ENCODE measurements at regions of chr15 and their contacts with region 1.

Region 1: DNA sequence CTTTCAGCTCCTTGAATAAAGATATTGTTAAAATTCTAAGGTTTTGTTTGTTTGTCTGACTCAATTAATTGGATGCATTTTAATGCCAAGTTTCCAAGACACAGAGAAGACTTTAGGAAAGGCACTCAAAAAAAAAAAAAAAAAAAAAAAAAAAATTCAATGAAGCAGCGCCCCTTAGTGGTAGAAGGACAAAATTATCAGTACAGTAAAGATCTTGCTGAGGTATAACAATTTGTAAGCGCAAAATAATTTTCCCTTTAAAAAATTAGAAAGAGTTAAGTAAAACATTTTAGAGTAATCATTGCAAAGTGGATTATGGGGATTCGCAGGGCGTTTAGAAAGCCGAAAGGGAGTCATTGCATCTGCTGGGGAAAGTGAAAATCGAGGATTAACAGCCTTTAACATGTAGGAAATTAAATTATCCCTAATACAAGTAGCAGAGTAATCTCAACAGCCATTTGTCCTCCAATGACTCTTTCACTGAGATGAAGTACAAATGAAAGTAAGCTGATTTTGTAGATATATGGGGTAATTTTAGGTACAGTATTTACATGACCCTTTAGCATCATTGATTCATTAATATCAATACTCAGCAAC is 5.8 kb upstream of the DIS3L start:
- DNase-seq: no peak
- H3K4me3 ChIP-seq: no peak overlapping the region
- H3K27ac ChIP-seq: no peak overlapping the region
- H3K4me1 ChIP-seq: peaks cover 4% of the 10 kb centered on the region
- H3K27me3 ChIP-seq: no peaks in the 10 kb centered on the region
- CTCF ChIP-seq: peak; percentile 60

Region 2: GRCh38 chr15:65980824-65981456 is 306.6 kb before region 1 on chr15:
- intact Hi-C with region 1: loop called (anchors 5 kb)
- DNase-seq: peak; percentile 72
- H3K4me3 ChIP-seq: no peak overlapping the region
- H3K27ac ChIP-seq: no peak overlapping the region
- H3K4me1 ChIP-seq: no peaks in the 10 kb centered on the region
- H3K27me3 ChIP-seq: no peaks in the 10 kb centered on the region
- CTCF ChIP-seq: peak; percentile 78

Region 3: GRCh38 chr15:66251790-66252684 is 35.5 kb before region 1 on chr15:
- intact Hi-C with region 1: loop called (anchors 5 kb)
- DNase-seq: peak; percentile 57
- H3K4me3 ChIP-seq: peak overlapping the region; percentile 47
- H3K27ac ChIP-seq: no peak overlapping the region
- H3K4me1 ChIP-seq: peaks cover 18% of the 10 kb centered on the region
- H3K27me3 ChIP-seq: peaks cover 56% of the 10 kb centered on the region
- CTCF ChIP-seq: peak; percentile 72

Region 4: DNA sequence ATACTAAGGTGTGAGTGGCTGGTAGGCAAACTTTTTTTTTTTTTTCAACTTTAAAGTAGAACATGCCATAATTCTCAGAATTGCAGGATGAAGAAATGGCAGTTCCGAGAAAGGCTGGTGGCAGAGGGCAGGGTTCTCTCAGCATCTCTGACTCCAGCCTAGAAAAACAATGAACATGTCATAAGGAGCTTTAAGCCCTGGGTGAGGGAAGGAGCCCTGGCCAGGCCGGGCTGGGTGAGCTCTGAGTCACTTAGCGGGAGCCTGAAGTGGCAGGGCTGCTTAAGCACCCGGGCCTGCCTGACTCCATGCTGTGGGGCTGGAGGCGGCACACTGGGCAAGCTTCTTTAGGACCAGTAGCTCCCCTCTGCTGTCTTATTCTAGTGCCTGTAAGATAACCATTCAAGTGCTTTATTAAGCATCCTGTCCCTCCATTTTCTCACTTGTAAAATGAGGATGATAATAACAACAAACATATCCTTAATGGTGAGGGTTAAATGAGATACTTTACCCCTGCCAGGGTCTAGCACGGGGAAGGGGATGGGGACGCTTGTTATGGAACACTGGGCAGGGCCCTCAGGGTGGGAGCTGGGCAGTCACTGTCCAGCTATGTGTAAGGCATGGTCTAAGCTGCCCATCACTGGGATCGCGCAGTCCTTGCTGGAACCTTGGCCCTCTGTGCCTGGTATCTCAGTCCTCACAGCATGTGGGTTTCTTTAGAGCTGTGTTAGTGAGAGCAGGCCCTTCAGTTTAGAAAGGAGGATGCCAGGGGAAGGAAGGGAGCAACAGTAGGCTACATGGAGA is 432.8 kb after region 1 on chr15:
- intact Hi-C with region 1: no loop called
- DNase-seq: no peak
- H3K4me3 ChIP-seq: no peak overlapping the region
- H3K27ac ChIP-seq: no peak overlapping the region
- H3K4me1 ChIP-seq: no peaks in the 10 kb centered on the region
- H3K27me3 ChIP-seq: no peaks in the 10 kb centered on the region
- CTCF ChIP-seq: no peak

Measured in colonic mucosa (tissue), 4 donors.